ENCODE measurements at regions of chr17 and their contacts with region 1.

Region 1: GRCh38 chr17:75271233-75271954 is 363 bp upstream of the MIF4GD start:
- DNase-seq: peak; percentile 82 to 92 (median 86)
- ATAC-seq: peak; percentile 32 to 83 (median 72)
- H3K4me3 ChIP-seq: peak overlapping the region; percentile 62 to 99 (median 95)
- H3K27ac ChIP-seq: peak overlapping the region; percentile 84 to 98 (median 92)
- H3K4me1 ChIP-seq: peaks cover 0 to 53% (median 22%) of the 10 kb centered on the region in 12 donors
- H3K27me3 ChIP-seq: no peaks in the 10 kb centered on the region
- CTCF ChIP-seq: peak; percentile 37 to 95 (median 83)
- POLR2A ChIP-seq: peak in 1 of 2 donors; percentile 38

Region 2: GRCh38 chr17:75228837-75229236 is 42.6 kb before region 1 on chr17:
- intact Hi-C with region 1: no loop called
- DNase-seq: peak in 2 of 5 donors; percentile 53 to 56
- ATAC-seq: peak; percentile 30 to 50 (median 46)
- H3K4me3 ChIP-seq: no peak overlapping the region
- H3K27ac ChIP-seq: peak overlapping the region in 6 of 12 donors; percentile 3 to 90 (median 17)
- H3K4me1 ChIP-seq: peaks cover 0 to 27% (median 0%) of the 10 kb centered on the region in 12 donors
- H3K27me3 ChIP-seq: no peaks in the 10 kb centered on the region
- CTCF ChIP-seq: no peak
- POLR2A ChIP-seq: no peak

Region 3: GRCh38 chr17:75338335-75338734 is 66.9 kb after region 1 on chr17:
- intact Hi-C with region 1: loop called in 1 of 10 experiments (anchors 10 kb)
- DNase-seq: no peak
- ATAC-seq: peak in 2 of 4 donors; percentile 36 to 42
- H3K4me3 ChIP-seq: peak overlapping the region in 2 of 12 donors; percentile 2 to 9
- H3K27ac ChIP-seq: peak overlapping the region in 7 of 12 donors; percentile 3 to 85 (median 35)
- H3K4me1 ChIP-seq: peaks cover 0 to 88% (median 17%) of the 10 kb centered on the region in 12 donors
- H3K27me3 ChIP-seq: no peaks in the 10 kb centered on the region
- CTCF ChIP-seq: no peak
- POLR2A ChIP-seq: no peak

Region 4: GRCh38 chr17:75348386-75349012 is 77.1 kb after region 1 on chr17:
- intact Hi-C with region 1: no loop called
- DNase-seq: no peak
- ATAC-seq: no peak
- H3K4me3 ChIP-seq: no peak overlapping the region
- H3K27ac ChIP-seq: no peak overlapping the region
- H3K4me1 ChIP-seq: peaks cover 0 to 97% (median 24%) of the 10 kb centered on the region in 12 donors
- H3K27me3 ChIP-seq: no peaks in the 10 kb centered on the region
- CTCF ChIP-seq: no peak
- POLR2A ChIP-seq: no peak

Region 5: DNA sequence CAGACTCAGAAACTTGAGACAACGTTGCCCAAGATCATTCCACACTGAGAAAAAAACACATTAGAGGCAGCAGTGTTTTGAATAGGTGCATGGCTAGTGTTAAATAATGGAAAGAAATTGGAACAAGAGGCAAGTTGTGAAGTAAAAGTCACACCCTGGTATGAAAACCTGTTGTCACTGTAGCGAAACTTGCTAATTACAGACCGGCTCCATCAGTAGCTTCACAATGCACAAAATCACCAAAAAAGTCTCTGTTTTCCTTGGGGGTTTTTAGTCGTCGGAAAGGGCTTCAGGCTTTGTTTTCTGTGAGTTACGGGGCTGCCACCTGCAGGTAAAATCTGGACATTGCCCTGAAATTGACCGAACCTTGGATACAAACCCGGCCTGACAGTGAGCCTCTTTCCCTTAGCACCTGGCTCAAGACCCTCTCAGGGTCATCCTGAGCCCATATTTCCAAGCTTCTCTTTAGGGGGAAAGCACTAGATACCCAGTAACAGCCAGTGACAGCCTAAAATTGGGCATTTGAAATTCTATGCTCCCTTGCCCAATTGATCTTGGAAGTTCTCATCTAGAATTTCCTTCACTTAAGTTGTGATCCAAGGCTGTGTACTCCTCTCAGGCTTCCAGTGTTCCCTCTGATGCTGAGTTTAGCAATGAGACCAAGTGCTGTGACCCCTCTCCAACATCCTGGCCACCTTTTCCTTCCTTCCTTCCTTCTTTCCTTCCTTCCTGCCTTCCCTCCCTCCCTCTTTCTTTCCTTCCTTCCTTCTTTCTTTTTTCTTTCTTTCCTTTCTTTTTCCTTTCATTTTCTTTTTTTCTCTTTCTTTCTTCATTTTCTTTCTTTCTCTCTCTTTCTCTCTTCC is 141.3 kb after region 1 on chr17:
- intact Hi-C with region 1: loop called in 2 of 10 experiments (anchors 2 to 5 kb)
- DNase-seq: peak in 3 of 5 donors; percentile 39 to 50 (median 46)
- ATAC-seq: peak; percentile 21 to 67 (median 53)
- H3K4me3 ChIP-seq: peak overlapping the region in 7 of 12 donors; percentile 4 to 32 (median 10)
- H3K27ac ChIP-seq: no peak overlapping the region
- H3K4me1 ChIP-seq: peaks cover 0 to 14% (median 1%) of the 10 kb centered on the region in 12 donors
- H3K27me3 ChIP-seq: no peaks in the 10 kb centered on the region
- CTCF ChIP-seq: peak; percentile 65 to 90 (median 78)
- POLR2A ChIP-seq: no peak

Region 6: DNA sequence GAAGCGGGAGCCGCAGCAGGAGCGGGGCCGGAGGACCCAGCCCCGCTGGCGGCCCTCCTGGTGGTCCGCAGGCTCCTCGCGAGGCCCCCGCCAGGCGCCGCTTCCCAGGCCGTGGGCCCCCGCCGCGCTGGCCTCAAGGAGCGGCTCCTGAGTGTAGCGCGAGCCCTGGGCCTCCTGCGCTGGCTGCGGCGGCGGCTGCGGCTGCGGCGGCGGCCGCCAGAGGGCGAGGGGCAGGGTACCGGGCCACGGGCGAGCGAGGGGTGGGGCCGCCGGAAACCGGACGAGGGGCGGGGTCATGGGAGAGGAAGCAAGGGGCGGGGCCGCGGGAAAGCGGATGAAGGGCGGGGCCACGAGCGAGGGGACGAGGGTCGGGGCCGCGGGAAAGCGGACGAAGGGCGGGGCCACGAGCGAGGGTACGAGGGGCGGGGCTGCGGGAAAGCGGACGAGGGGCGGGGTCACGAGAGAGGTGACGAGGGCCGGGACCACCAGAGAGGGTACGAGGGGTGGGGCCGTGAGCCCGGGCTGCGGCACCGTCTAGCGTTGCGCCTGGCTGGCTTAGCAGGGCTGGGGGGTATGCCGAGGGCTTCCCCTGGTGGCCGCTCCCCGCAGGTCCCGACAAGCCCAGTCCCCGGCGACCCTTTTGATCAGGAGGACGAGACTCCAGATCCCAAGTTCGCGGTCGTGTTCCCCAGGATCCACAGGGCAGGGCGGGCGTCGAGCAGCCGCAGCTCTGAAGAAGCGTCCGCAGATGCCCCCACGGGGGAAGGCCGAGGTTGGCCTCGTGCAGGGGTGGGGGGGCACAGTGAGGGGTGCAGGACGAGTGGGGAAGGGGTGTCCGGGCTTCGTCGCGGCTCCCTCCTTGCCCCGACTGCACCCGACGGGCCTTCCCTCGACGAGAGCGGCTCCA is 317.9 kb after region 1 on chr17:
- intact Hi-C with region 1: loop called in 1 of 10 experiments (anchors 5 kb)
- DNase-seq: peak; percentile 96 to 98 (median 98)
- ATAC-seq: peak; percentile 89 to 95 (median 90)
- H3K4me3 ChIP-seq: peak overlapping the region; percentile 34 to 92 (median 75)
- H3K27ac ChIP-seq: peak overlapping the region; percentile 85 to 98 (median 95)
- H3K4me1 ChIP-seq: peaks cover 0 to 29% (median 14%) of the 10 kb centered on the region in 12 donors
- H3K27me3 ChIP-seq: no peaks in the 10 kb centered on the region
- CTCF ChIP-seq: peak; percentile 20 to 89 (median 64)
- POLR2A ChIP-seq: peak in 1 of 2 donors; percentile 67

Measured in heart left ventricle (tissue), 16 donors.